ENCODE measurements at regions of chr2 and their contacts with region 1.

Region 1: GRCh38 chr2:65522922-65523321 is 90.5 kb upstream of the SPRED2 start:
- DNase-seq: no peak
- ATAC-seq: no peak
- H3K4me3 ChIP-seq: no peak overlapping the region
- H3K27ac ChIP-seq: no peak overlapping the region
- H3K4me1 ChIP-seq: peaks cover 32% of the 10 kb centered on the region
- H3K27me3 ChIP-seq: no peaks in the 10 kb centered on the region
- CTCF ChIP-seq: no peak
- EP300 ChIP-seq: no peak
- POLR2A ChIP-seq: no peak
- RAD21 ChIP-seq: no peak

Region 2: DNA sequence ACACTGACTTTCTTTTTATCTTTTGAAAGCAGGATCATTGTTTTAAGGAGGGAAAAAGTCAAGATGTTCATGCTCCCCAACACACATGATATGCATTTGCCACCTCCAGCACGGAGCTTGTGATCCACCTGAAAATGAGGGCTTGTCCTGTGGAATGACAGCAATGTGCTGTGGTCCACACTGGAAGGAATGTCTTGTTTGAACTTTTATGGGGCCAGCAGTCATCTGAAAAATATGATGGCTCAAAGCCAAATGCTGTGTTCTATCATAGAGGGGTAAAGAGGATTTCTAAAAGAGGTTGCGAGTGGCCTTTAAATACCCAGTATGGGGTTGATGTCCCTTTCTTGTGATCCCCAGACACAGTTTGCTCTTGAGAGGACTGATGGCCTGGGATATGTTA is 136.0 kb after region 1 on chr2:
- CTCF ChIA-PET with region 1: no interaction called
- POLR2A ChIA-PET with region 1: no interaction called
- in situ Hi-C with region 1: no loop called
- intact Hi-C with region 1: loop called (anchors 5 kb)
- DNase-seq: no peak
- ATAC-seq: no peak
- H3K4me3 ChIP-seq: no peak overlapping the region
- H3K27ac ChIP-seq: no peak overlapping the region
- H3K4me1 ChIP-seq: peaks cover 8% of the 10 kb centered on the region
- H3K27me3 ChIP-seq: peaks cover 2 to 21% of the 10 kb centered on the region in 2 experiments; a peak in 2 of 5 replicates
- CTCF ChIP-seq: no peak
- EP300 ChIP-seq: no peak
- POLR2A ChIP-seq: no peak
- RAD21 ChIP-seq: no peak

Measured in HepG2 (cell line).